ENCODE measurements at regions of chr2 and their contacts with region 1.

Region 1: GRCh38 chr2:176356251-176356650 is 87.0 kb downstream of the MTX2 start:
- DNase-seq: no peak
- H3K4me3 ChIP-seq: no peak overlapping the region
- H3K27ac ChIP-seq: no peak overlapping the region
- H3K4me1 ChIP-seq: no peaks in the 10 kb centered on the region
- H3K27me3 ChIP-seq: no peaks in the 10 kb centered on the region
- CTCF ChIP-seq: no peak

Region 2: DNA sequence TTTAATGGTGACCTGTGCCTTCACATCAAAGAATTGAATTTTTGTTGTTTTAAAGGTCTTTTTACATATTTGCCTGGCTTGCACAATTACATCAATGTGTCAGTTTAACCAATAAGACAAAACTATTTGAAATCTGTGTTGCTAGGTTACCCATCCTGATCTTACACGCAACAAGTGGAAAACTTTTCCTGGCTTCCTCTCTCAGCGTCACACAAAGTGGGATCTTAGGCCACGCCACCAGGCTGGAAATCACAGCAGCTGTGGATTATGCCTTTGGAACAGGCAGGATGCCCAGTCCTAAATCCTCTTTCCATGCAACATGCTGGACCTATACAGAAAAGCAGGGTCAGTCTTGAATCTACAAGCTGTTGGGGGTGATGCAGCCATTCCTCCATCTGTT is 558.1 kb after region 1 on chr2:
- CTCF ChIA-PET with region 1: no interaction called
- POLR2A ChIA-PET with region 1: interaction called, 13 read pairs
- intact Hi-C with region 1: no loop called
- DNase-seq: no peak
- H3K4me3 ChIP-seq: no peak overlapping the region
- H3K27ac ChIP-seq: no peak overlapping the region
- H3K4me1 ChIP-seq: no peaks in the 10 kb centered on the region
- H3K27me3 ChIP-seq: no peaks in the 10 kb centered on the region
- CTCF ChIP-seq: no peak